Naive thymus-derived CD4-positive, alpha-beta T cell (primary cell): ENCODE measurements at regions of chr2 and their contacts with region 1.

Region 1: DNA sequence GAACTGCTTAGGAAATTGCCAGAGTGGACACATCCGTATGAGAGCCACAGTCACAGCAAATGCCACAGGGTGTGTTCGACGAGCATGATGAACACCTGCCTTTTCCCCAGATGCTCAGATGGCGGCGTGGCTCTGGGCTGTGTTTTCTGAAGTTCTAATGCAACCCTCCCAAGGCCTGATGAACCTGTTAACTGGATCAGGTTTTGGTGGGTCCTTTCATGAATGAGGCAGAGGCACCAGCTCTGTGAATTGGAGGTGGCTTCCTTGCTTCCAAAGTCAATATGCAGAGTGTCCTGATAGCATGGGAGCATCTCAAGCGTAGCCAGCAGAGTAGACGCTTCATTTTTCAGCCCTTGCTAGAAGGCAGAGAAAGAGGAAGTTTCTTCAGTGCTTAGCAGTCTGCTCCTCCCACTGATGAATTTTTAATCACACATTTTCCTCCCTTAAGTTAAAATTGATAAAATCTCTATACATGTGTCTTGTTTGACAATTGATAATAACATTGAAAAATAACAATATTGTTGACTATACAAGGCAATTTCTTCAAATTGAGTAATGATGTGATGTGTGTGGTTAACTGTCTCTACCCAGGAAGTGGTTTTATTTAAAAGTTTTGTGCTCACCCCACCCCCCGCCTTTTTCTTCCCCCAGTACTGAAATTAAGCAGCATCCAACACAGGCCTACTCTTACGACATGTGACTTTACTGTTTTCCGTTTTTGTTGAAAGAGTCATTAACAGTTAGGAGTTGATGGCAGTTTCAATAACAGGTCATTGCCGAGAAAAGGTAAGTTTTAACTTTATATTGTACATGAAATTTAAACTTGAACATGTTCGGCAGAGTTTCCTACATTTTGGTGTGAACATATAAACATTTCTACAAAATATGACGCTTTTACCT is at the start of gene ARHGAP15:
- DNase-seq: peak; percentile 31 to 89 (median 83)
- ATAC-seq: peak; percentile 95
- H3K4me3 ChIP-seq: peak within 1 kb of the TSS; percentile 70
- H3K4me3 Mint-ChIP-seq: peak within 1 kb of the TSS; percentile 76 to 91 (median 82)
- H3K27ac ChIP-seq: peak within 1 kb of the TSS; percentile 84
- H3K27ac Mint-ChIP-seq: peak within 1 kb of the TSS in 5 of 9 donors; percentile 85 to 98 (median 98)
- H3K4me1 ChIP-seq: peaks cover 46 to 52% of the 10 kb centered on the region in 2 donors
- H3K4me1 Mint-ChIP-seq: peaks cover 20 to 39% (median 33%) of the 10 kb centered on the region in 7 donors
- H3K27me3 ChIP-seq: no peaks in the 10 kb centered on the region
- H3K27me3 Mint-ChIP-seq: no peaks in the 10 kb centered on the region
- total RNA-seq, gene ARHGAP15: 164 to 218 (median 183) TPM

Region 2: GRCh38 chr2:143110758-143111428 is 18.0 kb before region 1 on chr2:
- CTCF ChIA-PET with region 1: interaction called, 18 read pairs
- POLR2A ChIA-PET with region 1: interaction called, 31 read pairs
- intact Hi-C with region 1: loop called (anchors 1 kb)
- DNase-seq: peak; percentile 18 to 70 (median 61)
- ATAC-seq: peak; percentile 90
- H3K4me3 ChIP-seq: no peak overlapping the region
- H3K4me3 Mint-ChIP-seq: peak overlapping the region in 4 of 10 donors; percentile 10 to 69 (median 60)
- H3K27ac ChIP-seq: no peak overlapping the region
- H3K27ac Mint-ChIP-seq: peak overlapping the region in 7 of 9 donors; percentile 17 to 83 (median 71)
- H3K4me1 ChIP-seq: peaks cover 0 to 20% of the 10 kb centered on the region in 2 donors
- H3K4me1 Mint-ChIP-seq: peaks cover 9 to 45% (median 38%) of the 10 kb centered on the region in 7 donors
- H3K27me3 ChIP-seq: no peaks in the 10 kb centered on the region
- H3K27me3 Mint-ChIP-seq: peaks cover 0 to 7% (median 6%) of the 10 kb centered on the region in 5 donors

Region 3: DNA sequence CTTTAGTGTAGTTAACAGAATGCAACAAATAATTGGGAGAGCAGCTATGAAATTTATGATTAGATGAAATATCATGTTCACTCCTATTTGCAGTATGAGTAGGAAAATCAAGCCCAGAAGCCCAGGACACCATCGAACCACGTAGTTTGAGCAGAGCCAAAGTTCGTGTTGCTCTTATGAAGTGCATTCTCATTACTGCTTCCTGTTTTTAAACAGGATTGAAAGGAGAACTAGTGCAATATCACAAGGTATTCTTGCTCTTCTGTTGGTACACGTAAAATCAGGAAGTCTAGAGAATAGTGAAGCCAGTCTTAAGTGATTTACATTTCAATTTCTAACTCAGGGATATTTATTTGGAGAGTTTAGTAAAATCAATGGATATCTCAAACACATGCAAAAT is 21.4 kb after region 1 on chr2:
- CTCF ChIA-PET with region 1: interaction called, 4 read pairs
- POLR2A ChIA-PET with region 1: interaction called, 95 read pairs
- intact Hi-C with region 1: loop called in 1 of 2 experiments (anchors 1 kb)
- DNase-seq: peak in 2 of 9 donors; percentile 25 to 33
- ATAC-seq: peak; percentile 80
- H3K4me3 ChIP-seq: peak overlapping the region; percentile 17
- H3K4me3 Mint-ChIP-seq: peak overlapping the region; percentile 38 to 79 (median 70)
- H3K27ac ChIP-seq: peak overlapping the region; percentile 63
- H3K27ac Mint-ChIP-seq: peak overlapping the region; percentile 56 to 96 (median 84)
- H3K4me1 ChIP-seq: peaks cover 61 to 65% of the 10 kb centered on the region in 2 donors
- H3K4me1 Mint-ChIP-seq: peaks cover 68 to 100% (median 91%) of the 10 kb centered on the region in 7 donors
- H3K27me3 ChIP-seq: no peaks in the 10 kb centered on the region
- H3K27me3 Mint-ChIP-seq: no peaks in the 10 kb centered on the region

Region 4: DNA sequence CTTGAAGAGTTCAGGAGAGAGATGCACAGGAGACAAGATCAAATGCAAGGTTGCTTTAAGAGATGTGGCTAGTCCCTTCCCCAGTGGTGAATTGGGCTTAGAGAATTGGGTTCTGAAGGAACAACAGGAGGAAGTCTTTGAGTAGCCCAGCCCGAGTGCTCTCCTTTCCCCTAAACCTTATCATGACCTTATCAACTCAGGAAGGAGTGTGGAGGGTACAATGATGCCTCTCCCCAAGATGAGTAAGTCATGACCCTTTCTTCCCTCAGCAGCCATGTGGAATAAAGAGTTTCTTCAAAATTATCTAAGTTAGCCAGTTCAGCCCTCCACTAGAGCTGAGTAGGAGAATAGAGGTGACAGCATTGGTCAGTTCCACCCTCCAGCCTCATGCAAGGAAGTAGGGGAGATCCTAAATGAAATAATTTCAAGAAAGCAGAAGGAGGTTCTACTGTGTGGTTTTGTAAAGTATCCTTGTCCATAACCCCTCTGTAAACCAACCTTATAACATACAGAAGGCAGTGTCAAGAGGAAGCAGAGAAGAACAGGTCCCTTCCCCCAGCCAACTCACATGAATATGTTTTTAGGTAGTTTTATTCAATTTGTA is 88.7 kb after region 1 on chr2:
- CTCF ChIA-PET with region 1: interaction called, 4 read pairs
- POLR2A ChIA-PET with region 1: interaction called, 4 read pairs
- intact Hi-C with region 1: loop called in 1 of 2 experiments (anchors 1 kb)
- DNase-seq: no peak
- ATAC-seq: peak; percentile 75
- H3K4me3 ChIP-seq: no peak overlapping the region
- H3K4me3 Mint-ChIP-seq: peak overlapping the region in 3 of 10 donors; percentile 10 to 31 (median 25)
- H3K27ac ChIP-seq: no peak overlapping the region
- H3K27ac Mint-ChIP-seq: peak overlapping the region; percentile 17 to 85 (median 53)
- H3K4me1 ChIP-seq: peaks cover 4 to 5% of the 10 kb centered on the region in 2 donors
- H3K4me1 Mint-ChIP-seq: peaks cover 29 to 81% (median 67%) of the 10 kb centered on the region in 7 donors
- H3K27me3 ChIP-seq: no peaks in the 10 kb centered on the region
- H3K27me3 Mint-ChIP-seq: no peaks in the 10 kb centered on the region

Region 5: DNA sequence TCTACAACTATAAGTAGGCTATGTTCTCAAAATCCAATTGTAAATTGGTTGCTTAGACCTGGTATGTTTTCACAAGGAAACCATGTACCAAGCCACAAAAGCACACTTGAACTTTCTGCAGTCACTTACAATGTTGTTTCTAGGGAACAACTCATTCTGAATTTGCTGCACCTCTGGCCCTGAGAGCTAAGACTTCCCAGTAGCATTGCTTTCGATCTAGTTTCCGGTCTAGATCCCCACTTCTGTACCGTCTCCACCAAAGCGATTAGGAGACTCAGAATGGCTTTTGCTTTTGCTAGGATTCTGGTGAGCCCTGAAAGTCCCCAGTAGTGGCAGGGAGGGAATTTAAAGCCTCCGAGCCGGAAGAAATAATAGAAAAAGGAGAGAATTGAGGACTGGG is 313.3 kb after region 1 on chr2:
- CTCF ChIA-PET with region 1: no interaction called
- POLR2A ChIA-PET with region 1: no interaction called
- intact Hi-C with region 1: no loop called
- DNase-seq: no peak
- ATAC-seq: no peak
- H3K4me3 ChIP-seq: no peak overlapping the region
- H3K4me3 Mint-ChIP-seq: peak overlapping the region in 1 of 10 donors; percentile 19
- H3K27ac ChIP-seq: no peak overlapping the region
- H3K27ac Mint-ChIP-seq: peak overlapping the region in 1 of 9 donors; percentile 75
- H3K4me1 ChIP-seq: no peaks in the 10 kb centered on the region
- H3K4me1 Mint-ChIP-seq: peaks cover 5 to 31% (median 17%) of the 10 kb centered on the region in 7 donors
- H3K27me3 ChIP-seq: no peaks in the 10 kb centered on the region
- H3K27me3 Mint-ChIP-seq: no peaks in the 10 kb centered on the region

Region 6: DNA sequence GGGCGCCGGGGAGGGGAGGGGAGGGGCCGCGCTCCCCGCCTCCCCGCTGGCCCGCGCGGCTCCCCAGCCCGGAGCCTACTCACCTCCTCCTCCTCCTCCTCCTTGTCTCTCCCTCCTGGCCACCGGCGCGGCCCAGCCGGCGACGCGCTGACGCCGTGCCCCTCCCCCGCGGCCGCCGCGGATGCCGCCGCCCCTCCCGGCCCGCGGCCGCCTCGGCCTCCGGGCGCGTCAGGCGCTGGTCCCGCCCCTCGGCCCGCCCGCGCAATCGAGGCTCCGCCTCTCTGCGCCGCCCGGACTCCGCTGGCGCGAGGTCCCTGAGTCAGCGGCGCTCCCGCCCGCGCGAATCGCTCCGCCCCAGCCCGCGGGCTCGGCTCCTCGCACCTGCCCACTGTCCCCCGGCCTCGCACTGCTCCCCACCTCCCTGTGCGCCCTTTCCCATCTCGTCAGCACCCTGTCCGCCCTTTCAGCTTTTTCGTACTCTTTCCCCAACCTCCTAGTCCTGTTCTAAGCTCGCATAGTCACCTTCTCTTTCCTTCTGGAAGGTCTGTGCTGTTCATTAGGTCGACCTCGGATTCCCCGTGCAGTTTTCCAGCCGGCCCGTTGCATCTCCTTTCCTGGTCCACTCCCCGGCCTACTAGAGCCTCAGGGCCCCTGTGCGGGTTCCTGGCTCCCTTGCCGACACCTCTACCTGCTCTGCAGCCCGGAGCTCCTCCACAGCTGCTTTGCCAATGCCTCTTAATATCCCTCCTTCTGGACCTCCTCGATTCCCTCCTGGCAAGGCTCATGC is 1203.6 kb after region 1 on chr2:
- CTCF ChIA-PET with region 1: no interaction called
- POLR2A ChIA-PET with region 1: no interaction called
- intact Hi-C with region 1: loop called (anchors 5 kb)
- DNase-seq: peak; percentile 65 to 97 (median 85)
- ATAC-seq: peak; percentile 95
- H3K4me3 ChIP-seq: peak overlapping the region; percentile 75
- H3K4me3 Mint-ChIP-seq: peak overlapping the region; percentile 91 to 96 (median 93)
- H3K27ac ChIP-seq: peak overlapping the region; percentile 64
- H3K27ac Mint-ChIP-seq: peak overlapping the region; percentile 54 to 91 (median 87)
- H3K4me1 ChIP-seq: peaks cover 5 to 26% of the 10 kb centered on the region in 2 donors
- H3K4me1 Mint-ChIP-seq: peaks cover 7 to 31% (median 13%) of the 10 kb centered on the region in 7 donors
- H3K27me3 ChIP-seq: no peaks in the 10 kb centered on the region
- H3K27me3 Mint-ChIP-seq: peaks cover 0 to 6% (median 0%) of the 10 kb centered on the region in 5 donors